ENCODE measurements at regions of chr2 and their contacts with region 1.

Region 1: GRCh38 chr2:148519013-148519412 is 125.5 kb upstream of the EPC2 start:
- DNase-seq: no peak
- H3K4me3 ChIP-seq: no peak overlapping the region
- H3K27ac ChIP-seq: no peak overlapping the region
- H3K4me1 ChIP-seq: peaks cover 0 to 7% (median 0%) of the 10 kb centered on the region in 4 donors
- H3K27me3 ChIP-seq: no peaks in the 10 kb centered on the region
- CTCF ChIP-seq: no peak
- EP300 ChIP-seq: no peak
- POLR2A ChIP-seq: no peak

Region 2: DNA sequence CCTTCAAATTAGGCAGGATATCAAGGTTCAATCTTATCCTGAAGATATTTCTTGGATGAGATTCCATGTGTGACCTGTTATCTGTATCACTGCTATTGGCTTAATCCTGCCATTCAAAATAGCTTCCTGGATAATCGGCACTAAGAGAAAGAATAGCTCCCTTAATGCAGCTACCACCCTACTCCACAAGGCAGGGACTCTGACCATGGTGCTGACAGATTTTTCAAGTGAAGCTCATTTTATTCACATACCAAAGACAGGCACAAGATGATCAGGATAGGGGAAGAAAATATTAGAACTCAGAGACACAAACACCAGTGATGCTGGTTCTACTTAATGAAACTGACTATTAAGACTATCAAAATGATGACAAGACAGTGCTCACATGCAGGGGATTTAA is 573.4 kb before region 1 on chr2:
- intact Hi-C with region 1: loop called (anchors 10 kb)
- DNase-seq: peak in 1 of 2 donors; percentile 16
- H3K4me3 ChIP-seq: no peak overlapping the region
- H3K27ac ChIP-seq: no peak overlapping the region
- H3K4me1 ChIP-seq: peaks cover 0 to 4% (median 0%) of the 10 kb centered on the region in 4 donors
- H3K27me3 ChIP-seq: no peaks in the 10 kb centered on the region
- CTCF ChIP-seq: no peak
- EP300 ChIP-seq: no peak
- POLR2A ChIP-seq: no peak

Region 3: GRCh38 chr2:148362144-148362796 is 156.7 kb before region 1 on chr2:
- intact Hi-C with region 1: no loop called
- DNase-seq: no peak
- H3K4me3 ChIP-seq: no peak overlapping the region
- H3K27ac ChIP-seq: no peak overlapping the region
- H3K4me1 ChIP-seq: no peaks in the 10 kb centered on the region
- H3K27me3 ChIP-seq: no peaks in the 10 kb centered on the region
- CTCF ChIP-seq: no peak
- EP300 ChIP-seq: no peak
- POLR2A ChIP-seq: no peak

Measured in stomach (tissue), 19 donors.